Activated T-helper 2 cell treated with anti-CD3 and anti-CD28 coated beads, Interferon-gamma antibody, Interleukin-2, Interleukin-4, amounts not matched to agents 10 μg/mL and 5 μg/mL and 100 μg/mL, durations not matched to agents 14 hours and 24 hours and 36 hours (primary cell): ENCODE measurements at regions of chr11 and their contacts with region 1.

Region 1: DNA sequence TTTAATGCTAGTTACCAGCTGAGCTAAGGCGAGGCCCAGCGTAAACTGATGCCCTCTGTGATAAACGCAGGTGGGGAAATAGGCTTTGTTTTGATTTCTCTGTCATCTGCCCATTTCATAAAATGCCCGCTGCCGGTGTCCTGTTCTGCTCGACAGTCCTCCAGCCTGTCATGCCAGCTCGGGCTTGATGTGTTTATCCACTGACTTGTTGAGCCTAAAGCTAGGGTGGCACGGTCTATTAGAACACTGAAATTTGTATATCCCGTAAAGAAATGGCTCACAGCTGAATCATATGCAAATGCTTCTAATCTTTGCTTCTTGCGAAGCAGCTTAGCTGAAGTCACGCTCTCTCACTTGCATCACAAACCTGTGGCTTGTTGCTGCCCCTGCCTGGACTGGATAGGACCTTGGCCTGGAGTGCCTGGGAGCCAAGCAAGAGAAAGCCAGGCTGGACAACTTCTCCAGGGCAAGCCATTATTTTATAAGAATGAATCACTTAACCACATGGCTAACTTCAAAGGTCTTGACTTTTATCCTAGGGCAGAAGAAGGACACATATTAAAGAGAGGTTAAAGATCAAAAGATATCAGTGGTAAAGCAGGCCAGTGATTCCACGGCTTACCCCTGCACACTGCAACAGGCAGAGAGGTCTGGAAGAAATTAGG is 33.1 kb downstream of the EHF start:
- DNase-seq: no peak
- H3K4me3 Mint-ChIP-seq: no peak overlapping the region
- H3K27ac Mint-ChIP-seq: peak overlapping the region; percentile 56
- H3K4me1 Mint-ChIP-seq: peaks cover 31% of the 10 kb centered on the region
- H3K27me3 Mint-ChIP-seq: peaks cover 53% of the 10 kb centered on the region

Region 2: GRCh38 chr11:33893711-33894397 is 760.1 kb before region 1 on chr11:
- intact Hi-C with region 1: loop called (anchors 2 kb)
- DNase-seq: peak; percentile 59
- H3K4me3 Mint-ChIP-seq: peak overlapping the region; percentile 16
- H3K27ac Mint-ChIP-seq: peak overlapping the region; percentile 46
- H3K4me1 Mint-ChIP-seq: peaks cover 19% of the 10 kb centered on the region
- H3K27me3 Mint-ChIP-seq: peaks cover 76% of the 10 kb centered on the region

Region 3: GRCh38 chr11:34438529-34439507 is 215.1 kb before region 1 on chr11 and contains the start of gene CAT:
- intact Hi-C with region 1: loop called (anchors 2 kb)
- DNase-seq: peak; percentile 97
- H3K4me3 Mint-ChIP-seq: peak within 1 kb of the TSS; percentile 90
- H3K27ac Mint-ChIP-seq: peak within 1 kb of the TSS; percentile 89
- H3K4me1 Mint-ChIP-seq: peaks cover 23% of the 10 kb centered on the region
- H3K27me3 Mint-ChIP-seq: no peaks in the 10 kb centered on the region
- total RNA-seq, gene CAT: 31.8 and 33.1 TPM in 2 replicates

Region 4: DNA sequence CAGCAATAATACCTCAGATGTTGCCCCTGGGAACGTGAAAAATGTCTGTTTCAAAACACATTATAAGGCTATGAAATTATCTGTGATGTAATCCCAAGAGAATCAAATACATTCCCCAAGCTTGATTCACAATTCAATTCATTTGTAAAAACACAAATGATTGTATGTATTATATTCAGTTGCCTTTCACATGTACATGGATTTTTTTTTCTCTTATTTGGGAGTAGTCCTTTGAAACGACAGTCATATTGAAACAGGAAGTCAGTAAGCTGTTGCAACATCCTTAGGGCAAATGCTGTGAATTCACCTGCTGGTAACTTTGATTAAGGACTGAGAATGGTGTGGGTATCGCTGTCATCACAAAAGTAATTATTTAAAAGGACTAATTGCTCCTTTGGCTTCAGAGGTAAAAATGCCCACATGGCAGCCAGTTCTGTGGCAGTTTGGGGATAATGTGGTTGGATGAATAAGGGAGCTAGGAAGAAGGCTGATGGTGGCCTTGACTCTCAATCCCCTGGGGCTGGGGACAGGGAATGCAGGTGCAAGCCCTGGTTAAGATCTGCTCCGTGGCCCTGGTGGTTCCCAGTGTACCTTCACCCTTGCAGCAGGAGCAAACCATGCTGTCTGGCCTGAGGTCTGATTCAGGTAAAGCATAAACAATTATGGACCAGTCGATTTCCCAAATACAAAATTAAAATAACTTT is 19.8 kb before region 1 on chr11:
- intact Hi-C with region 1: loop called (anchors 2 kb)
- DNase-seq: no peak
- H3K4me3 Mint-ChIP-seq: no peak overlapping the region
- H3K27ac Mint-ChIP-seq: no peak overlapping the region
- H3K4me1 Mint-ChIP-seq: peaks cover 13% of the 10 kb centered on the region
- H3K27me3 Mint-ChIP-seq: peaks cover 32% of the 10 kb centered on the region

Region 5: GRCh38 chr11:34855021-34855753 is 201.2 kb after region 1 on chr11:
- intact Hi-C with region 1: no loop called
- DNase-seq: no peak
- H3K4me3 Mint-ChIP-seq: no peak overlapping the region
- H3K27ac Mint-ChIP-seq: no peak overlapping the region
- H3K4me1 Mint-ChIP-seq: no peaks in the 10 kb centered on the region
- H3K27me3 Mint-ChIP-seq: peaks cover 7% of the 10 kb centered on the region

Region 6: GRCh38 chr11:35173011-35173511 is 519.1 kb after region 1 on chr11:
- intact Hi-C with region 1: loop called (anchors 10 kb)
- DNase-seq: no peak
- H3K4me3 Mint-ChIP-seq: no peak overlapping the region
- H3K27ac Mint-ChIP-seq: peak overlapping the region; percentile 75
- H3K4me1 Mint-ChIP-seq: peaks cover 91% of the 10 kb centered on the region
- H3K27me3 Mint-ChIP-seq: no peaks in the 10 kb centered on the region